AG04450 (cell line): ENCODE measurements at regions of chr20 and their contacts with region 1.

Region 1: DNA sequence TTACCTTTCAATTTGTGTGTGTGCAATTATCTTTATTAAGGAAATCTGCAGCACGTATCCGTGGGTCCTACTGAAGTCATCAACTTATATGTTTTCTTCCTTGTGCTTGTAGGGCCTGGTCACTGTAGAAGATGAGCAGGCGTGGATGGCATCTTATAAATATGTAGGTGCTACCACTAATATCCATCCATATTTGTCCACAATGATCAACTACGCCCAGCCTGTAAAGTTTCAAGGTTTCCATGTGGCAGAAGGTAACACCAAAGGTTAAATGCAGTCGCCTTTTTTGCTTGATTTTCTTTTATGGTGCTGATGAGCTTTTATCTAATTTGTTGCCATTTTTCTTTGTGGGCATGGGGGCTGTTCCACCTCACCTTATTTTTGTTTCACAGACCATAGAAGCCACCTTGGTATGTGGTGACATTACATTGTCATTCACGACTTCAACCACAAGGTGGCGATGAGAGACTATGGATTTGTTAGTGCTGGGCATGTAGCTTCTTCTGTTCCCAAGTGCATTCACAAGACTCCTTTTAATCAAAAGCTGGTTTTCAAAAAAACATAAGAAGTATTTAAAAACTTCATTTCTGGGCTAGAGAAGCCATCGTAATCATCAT is 106.5 kb upstream of the LAMP5 start:
- DNase-seq: peak; percentile 60
- H3K4me3 ChIP-seq: no peak overlapping the region
- H3K27ac ChIP-seq: no peak overlapping the region
- H3K27me3 ChIP-seq: no peaks in the 10 kb centered on the region
- CTCF ChIP-seq: peak; percentile 85

Region 2: DNA sequence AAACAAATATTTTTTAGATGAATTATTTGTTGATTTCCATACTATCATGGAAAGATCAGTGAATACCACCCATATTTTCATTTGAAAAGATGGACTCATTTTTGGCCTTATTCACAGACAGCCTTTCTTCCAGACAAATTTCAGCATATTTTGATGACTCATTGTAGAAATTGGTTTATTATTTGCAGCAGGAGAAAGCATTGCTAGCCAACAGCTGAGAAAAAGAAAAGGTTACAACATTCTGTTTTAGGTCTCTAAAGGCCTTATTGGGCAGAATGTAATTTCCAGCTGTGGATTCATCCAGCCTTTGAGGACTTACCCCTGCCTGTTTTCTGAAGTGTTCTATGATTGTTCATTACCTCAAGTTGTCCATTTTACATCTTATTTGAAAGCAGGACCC is 137.1 kb before region 1 on chr20:
- CTCF ChIA-PET with region 1: no interaction called
- POLR2A ChIA-PET with region 1: no interaction called
- DNase-seq: peak; percentile 38
- H3K4me3 ChIP-seq: no peak overlapping the region
- H3K27ac ChIP-seq: no peak overlapping the region
- H3K27me3 ChIP-seq: no peaks in the 10 kb centered on the region
- CTCF ChIP-seq: no peak

Region 3: GRCh38 chr20:9323622-9324021 is 84.3 kb before region 1 on chr20:
- CTCF ChIA-PET with region 1: no interaction called
- POLR2A ChIA-PET with region 1: no interaction called
- DNase-seq: no peak
- H3K4me3 ChIP-seq: no peak overlapping the region
- H3K27ac ChIP-seq: no peak overlapping the region
- H3K27me3 ChIP-seq: no peaks in the 10 kb centered on the region
- CTCF ChIP-seq: peak; percentile 55

Region 4: DNA sequence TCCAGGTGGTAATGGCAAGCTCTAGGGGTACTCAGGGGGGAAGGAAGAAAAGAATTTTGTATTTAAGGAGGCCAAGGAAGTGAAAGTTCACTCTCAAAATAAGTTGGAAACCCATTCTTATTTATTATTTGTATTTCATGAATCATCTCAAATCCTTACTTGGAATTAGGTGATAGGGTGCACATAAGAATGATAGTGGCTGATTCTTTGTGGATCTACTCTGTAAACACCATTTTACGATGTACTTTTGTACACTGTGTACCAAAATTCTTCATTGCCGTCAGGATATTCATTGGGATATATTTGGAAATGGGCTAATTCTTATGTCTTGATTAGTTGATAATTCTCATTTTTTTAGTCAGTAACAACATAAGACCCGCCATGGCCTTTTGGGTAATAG is 73.0 kb before region 1 on chr20:
- CTCF ChIA-PET with region 1: no interaction called
- POLR2A ChIA-PET with region 1: no interaction called
- DNase-seq: no peak
- H3K4me3 ChIP-seq: no peak overlapping the region
- H3K27ac ChIP-seq: no peak overlapping the region
- H3K27me3 ChIP-seq: no peaks in the 10 kb centered on the region
- CTCF ChIP-seq: no peak

Region 5: DNA sequence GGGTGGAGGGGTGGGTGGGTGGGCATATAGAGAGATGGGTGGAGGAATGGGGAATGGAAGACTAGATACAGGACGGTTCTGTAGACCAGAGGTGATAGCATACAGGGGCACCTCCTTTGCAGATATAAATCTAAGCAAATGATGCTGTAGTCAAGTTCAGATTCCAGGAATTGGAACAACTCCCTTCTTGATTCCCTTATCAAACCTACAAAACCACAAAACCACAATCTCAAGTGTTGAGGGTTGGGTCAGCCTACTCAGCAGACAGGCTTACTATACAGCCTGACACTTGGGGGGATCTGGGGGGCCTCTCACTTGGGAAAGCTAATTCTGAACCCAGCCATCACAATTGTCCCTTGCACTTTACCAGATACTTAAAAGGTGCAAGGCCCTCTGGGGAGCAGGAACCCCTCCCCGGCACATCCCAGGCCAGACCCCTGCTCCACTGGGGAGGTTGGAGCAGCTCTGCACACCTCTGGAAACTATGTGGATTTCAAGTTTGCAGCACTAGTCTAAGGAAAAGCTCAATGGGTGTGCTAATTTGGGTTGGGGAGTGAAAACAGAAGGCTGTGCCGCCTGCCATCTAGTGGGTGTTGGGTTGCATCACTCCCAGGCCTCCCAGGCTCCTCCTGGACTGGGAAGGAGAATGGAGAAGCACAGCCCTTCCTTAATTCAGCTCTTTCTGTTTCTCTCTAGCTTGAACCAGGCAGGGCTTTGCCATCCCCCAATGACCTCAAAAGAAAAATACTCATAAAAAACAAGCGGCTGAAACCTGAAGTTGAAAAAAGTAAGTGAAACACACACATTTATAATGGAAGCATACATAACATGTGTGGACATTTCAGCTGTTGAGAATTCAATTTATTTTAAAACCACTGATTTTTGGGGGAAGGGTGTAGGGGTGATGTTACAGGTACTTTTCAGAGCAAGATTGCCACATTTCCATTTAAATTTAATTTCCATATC is 14.7 kb before region 1 on chr20:
- CTCF ChIA-PET with region 1: interaction called, 16 read pairs
- POLR2A ChIA-PET with region 1: no interaction called
- DNase-seq: no peak
- H3K4me3 ChIP-seq: no peak overlapping the region
- H3K27ac ChIP-seq: no peak overlapping the region
- H3K27me3 ChIP-seq: no peaks in the 10 kb centered on the region
- CTCF ChIP-seq: peak; percentile 92

Region 6: DNA sequence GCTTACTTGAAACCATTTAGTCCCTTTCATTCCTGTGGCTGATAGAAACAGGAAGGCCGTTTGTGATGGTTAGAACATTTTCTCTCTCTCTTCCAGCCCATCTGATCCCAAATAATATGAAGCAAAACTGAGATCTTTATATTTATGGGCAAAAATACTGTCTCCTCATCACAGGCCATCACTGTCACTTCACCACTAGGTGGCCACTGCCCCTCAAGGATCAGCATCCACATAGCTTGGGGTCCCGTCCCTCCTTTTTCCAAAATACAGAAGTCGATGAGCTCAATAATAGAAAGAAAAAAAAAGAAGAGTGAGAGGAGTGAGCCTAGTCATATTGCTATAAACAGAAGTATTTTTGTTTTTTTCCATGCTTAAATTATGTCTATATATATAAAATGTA is 60.1 kb after region 1 on chr20:
- CTCF ChIA-PET with region 1: interaction called, 15 read pairs
- POLR2A ChIA-PET with region 1: no interaction called
- DNase-seq: no peak
- H3K4me3 ChIP-seq: no peak overlapping the region
- H3K27ac ChIP-seq: no peak overlapping the region
- H3K27me3 ChIP-seq: no peaks in the 10 kb centered on the region
- CTCF ChIP-seq: peak; percentile 47

Region 7: GRCh38 chr20:9597545-9597944 is 189.6 kb after region 1 on chr20:
- CTCF ChIA-PET with region 1: interaction called, 44 read pairs
- POLR2A ChIA-PET with region 1: no interaction called
- DNase-seq: no peak
- H3K4me3 ChIP-seq: no peak overlapping the region
- H3K27ac ChIP-seq: no peak overlapping the region
- H3K27me3 ChIP-seq: no peaks in the 10 kb centered on the region
- CTCF ChIP-seq: no peak

Region 8: GRCh38 chr20:9616833-9617489 is 209.0 kb after region 1 on chr20:
- CTCF ChIA-PET with region 1: interaction called, 606 read pairs
- POLR2A ChIA-PET with region 1: no interaction called
- DNase-seq: peak; percentile 23
- H3K4me3 ChIP-seq: no peak overlapping the region
- H3K27ac ChIP-seq: no peak overlapping the region
- H3K27me3 ChIP-seq: peaks cover 13% of the 10 kb centered on the region
- CTCF ChIP-seq: peak; percentile 76